ENCODE measurements at regions of chr2 and their contacts with region 1.

Region 1: GRCh38 chr2:50143822-50144575 is 887.9 kb downstream of the NRXN1 start:
- DNase-seq: peak; percentile 24
- ATAC-seq: peak; percentile 99
- H3K4me3 ChIP-seq: peak overlapping the region; percentile 69
- H3K27ac ChIP-seq: peak overlapping the region; percentile 33; the same call in 1 of the 2 replicates
- H3K4me1 ChIP-seq: no peaks in the 10 kb centered on the region
- H3K27me3 ChIP-seq: no peaks in the 10 kb centered on the region
- CTCF ChIP-seq: peak; percentile 54 to 68 (median 55); a peak in 5 of 6 replicates
- EP300 ChIP-seq: no peak
- POLR2A ChIP-seq: no peak
- RAD21 ChIP-seq: peak; percentile 69

Region 2: GRCh38 chr2:49255409-49255971 is 888.5 kb before region 1 on chr2:
- CTCF ChIA-PET with region 1: no interaction called
- POLR2A ChIA-PET with region 1: no interaction called
- RAD21 ChIA-PET with region 1: no interaction called
- SMC1A ChIA-PET with region 1: no interaction called
- in situ Hi-C with region 1: no loop called
- intact Hi-C with region 1: loop called (anchors 5 kb)
- DNase-seq: no peak
- ATAC-seq: no peak
- H3K4me3 ChIP-seq: no peak overlapping the region
- H3K27ac ChIP-seq: no peak overlapping the region
- H3K4me1 ChIP-seq: no peaks in the 10 kb centered on the region
- H3K27me3 ChIP-seq: no peaks in the 10 kb centered on the region
- CTCF ChIP-seq: no peak
- EP300 ChIP-seq: no peak
- POLR2A ChIP-seq: no peak
- RAD21 ChIP-seq: no peak

Region 3: GRCh38 chr2:49616800-49617199 is 527.2 kb before region 1 on chr2:
- CTCF ChIA-PET with region 1: interaction called, 14 read pairs
- POLR2A ChIA-PET with region 1: no interaction called
- RAD21 ChIA-PET with region 1: no interaction called
- SMC1A ChIA-PET with region 1: interaction called, 7 read pairs
- in situ Hi-C with region 1: loop called (anchors 10 kb)
- intact Hi-C with region 1: loop called (anchors 1 kb)
- DNase-seq: no peak
- ATAC-seq: peak; percentile 65
- H3K4me3 ChIP-seq: no peak overlapping the region
- H3K27ac ChIP-seq: no peak overlapping the region
- H3K4me1 ChIP-seq: no peaks in the 10 kb centered on the region
- H3K27me3 ChIP-seq: no peaks in the 10 kb centered on the region
- CTCF ChIP-seq: peak; percentile 31 to 43 (median 37); a peak in 4 of 6 replicates
- EP300 ChIP-seq: no peak
- POLR2A ChIP-seq: no peak
- RAD21 ChIP-seq: peak; percentile 50

Region 4: GRCh38 chr2:49770919-49771318 is 373.1 kb before region 1 on chr2:
- CTCF ChIA-PET with region 1: interaction called, 39 read pairs
- POLR2A ChIA-PET with region 1: no interaction called
- RAD21 ChIA-PET with region 1: interaction called, 16 read pairs
- SMC1A ChIA-PET with region 1: interaction called, 15 read pairs
- in situ Hi-C with region 1: loop called (anchors 10 kb)
- intact Hi-C with region 1: loop called (anchors 1 kb)
- DNase-seq: no peak
- ATAC-seq: peak; percentile 86
- H3K4me3 ChIP-seq: no peak overlapping the region
- H3K27ac ChIP-seq: no peak overlapping the region
- H3K4me1 ChIP-seq: no peaks in the 10 kb centered on the region
- H3K27me3 ChIP-seq: no peaks in the 10 kb centered on the region
- CTCF ChIP-seq: peak; percentile 31 to 47 (median 44); a peak in 5 of 6 replicates
- EP300 ChIP-seq: no peak
- POLR2A ChIP-seq: no peak
- RAD21 ChIP-seq: peak; percentile 63